CD8-positive, alpha-beta T cell (primary cell): ENCODE measurements at regions of chr21 and their contacts with region 1.

Region 1: DNA sequence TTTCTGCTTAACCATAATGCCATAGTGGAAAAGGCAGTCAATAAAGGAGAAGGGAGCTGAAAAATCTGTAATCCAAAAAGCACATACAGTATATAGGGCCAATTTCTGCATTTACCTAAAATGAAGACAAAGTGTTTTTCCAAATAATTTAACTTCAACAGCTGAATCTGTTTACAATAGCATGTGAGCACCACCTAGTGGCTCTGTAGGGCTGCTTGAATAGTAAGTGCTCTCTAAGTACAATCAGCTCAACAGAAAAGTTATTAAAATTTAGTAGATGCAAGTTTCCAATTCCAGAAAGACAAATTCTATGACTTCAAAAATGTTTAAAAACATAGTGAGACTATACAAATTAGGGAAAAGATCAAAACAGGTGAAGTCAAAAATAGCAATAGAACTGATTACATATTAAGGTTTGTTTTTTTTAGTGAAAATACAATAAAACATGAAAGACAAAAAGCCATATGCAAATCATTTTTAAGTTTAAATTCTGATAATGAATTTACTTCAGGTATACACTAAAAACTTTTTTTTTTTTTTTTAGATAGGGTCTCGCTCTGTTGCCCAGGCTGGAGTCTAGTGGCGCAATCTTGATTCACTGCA is 220.0 kb downstream of the SETD4 start:
- DNase-seq: peak in 8 of 9 experiments; percentile 5 to 74 (median 48)
- ATAC-seq: no peak
- H3K4me3 ChIP-seq: no peak overlapping the region
- H3K4me3 Mint-ChIP-seq: no peak overlapping the region
- H3K27ac ChIP-seq: no peak overlapping the region
- H3K27ac Mint-ChIP-seq: no peak overlapping the region
- H3K4me1 ChIP-seq: peaks cover 8% of the 10 kb centered on the region
- H3K4me1 Mint-ChIP-seq: peaks cover 6% of the 10 kb centered on the region
- H3K27me3 ChIP-seq: peaks cover 0 to 4% of the 10 kb centered on the region in 2 experiments
- H3K27me3 Mint-ChIP-seq: no peaks in the 10 kb centered on the region
- CTCF ChIP-seq: peak; percentile 93

Region 2: DNA sequence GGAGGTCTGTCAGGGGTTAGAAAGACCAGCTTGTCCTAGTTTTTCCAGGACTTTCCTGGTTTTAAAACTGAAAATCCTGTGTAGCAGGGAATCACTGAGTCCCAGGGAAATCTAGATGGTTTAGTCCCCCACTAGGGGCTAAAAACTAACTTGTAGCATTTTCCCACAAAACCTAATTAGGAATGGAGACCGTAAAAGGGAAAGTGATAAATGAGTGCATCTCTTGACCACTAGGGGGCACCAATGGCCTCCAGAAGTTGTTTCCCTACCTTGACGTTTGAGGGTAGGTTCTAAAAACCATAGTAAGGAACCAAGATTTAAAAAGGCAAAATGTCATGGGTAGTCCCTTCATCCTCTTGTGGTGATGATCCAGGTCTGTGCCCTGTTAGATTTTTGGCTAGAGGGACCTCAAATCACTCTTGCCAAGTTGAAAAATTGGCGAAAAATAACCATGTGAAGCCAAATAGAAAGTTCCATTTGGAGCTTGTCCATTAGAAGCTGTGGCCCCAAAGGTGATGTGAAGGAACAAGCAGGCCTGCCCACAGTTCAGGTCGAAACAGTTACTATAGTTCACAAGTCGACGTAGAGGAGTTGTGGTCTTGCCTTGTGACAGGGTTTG is 1147.0 kb before region 1 on chr21:
- CTCF ChIA-PET with region 1: interaction called, 30 read pairs
- POLR2A ChIA-PET with region 1: no interaction called
- intact Hi-C with region 1: loop called (anchors 1 kb)
- DNase-seq: peak in 8 of 9 experiments; percentile 15 to 75 (median 46)
- ATAC-seq: no peak
- H3K4me3 ChIP-seq: no peak overlapping the region
- H3K4me3 Mint-ChIP-seq: no peak overlapping the region
- H3K27ac ChIP-seq: no peak overlapping the region
- H3K27ac Mint-ChIP-seq: no peak overlapping the region
- H3K4me1 ChIP-seq: no peaks in the 10 kb centered on the region
- H3K4me1 Mint-ChIP-seq: no peaks in the 10 kb centered on the region
- H3K27me3 ChIP-seq: no peaks in the 10 kb centered on the region
- H3K27me3 Mint-ChIP-seq: peaks cover 15% of the 10 kb centered on the region
- CTCF ChIP-seq: peak; percentile 79

Region 3: DNA sequence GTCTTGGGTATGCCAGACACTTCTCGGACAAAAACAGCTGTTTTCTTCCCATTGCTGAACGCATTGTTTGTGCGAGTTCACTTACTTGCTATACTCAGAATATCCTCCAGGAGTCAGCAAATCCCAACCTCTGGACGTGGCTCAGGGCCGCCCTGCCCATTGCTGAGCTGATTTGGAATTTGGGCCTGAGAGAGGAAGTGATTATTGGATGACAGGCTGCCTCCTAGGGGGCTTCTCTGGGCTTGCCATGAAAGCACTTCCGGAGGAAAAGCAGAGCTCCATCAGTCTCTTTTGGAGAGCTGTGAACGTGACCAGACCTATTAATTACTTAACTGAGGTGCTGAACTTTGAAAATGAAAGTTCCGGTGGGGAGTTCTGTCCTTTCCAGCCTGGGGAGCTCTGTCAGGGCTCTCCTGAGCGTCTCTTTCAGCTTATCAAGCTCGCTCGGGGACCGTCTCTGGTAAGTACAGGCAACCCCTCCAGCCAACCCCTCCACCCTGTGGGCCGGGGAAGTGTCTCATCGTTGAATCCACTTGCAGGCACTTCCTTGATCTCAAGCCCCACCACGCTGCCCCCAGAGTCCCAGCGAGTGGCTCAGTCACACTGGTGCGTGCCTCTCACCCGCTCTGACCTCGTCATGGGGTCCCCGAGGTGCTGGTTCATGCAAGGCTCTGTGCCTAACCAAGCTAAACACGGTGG is 1094.6 kb before region 1 on chr21:
- CTCF ChIA-PET with region 1: interaction called, 44 read pairs
- POLR2A ChIA-PET with region 1: interaction called, 3 read pairs
- intact Hi-C with region 1: loop called in 1 of 2 experiments (anchors 1 kb)
- DNase-seq: peak; percentile 16 to 71 (median 44)
- ATAC-seq: peak; percentile 80
- H3K4me3 ChIP-seq: peak overlapping the region in 1 of 2 experiments; percentile 13
- H3K4me3 Mint-ChIP-seq: peak overlapping the region; percentile 71
- H3K27ac ChIP-seq: no peak overlapping the region
- H3K27ac Mint-ChIP-seq: no peak overlapping the region
- H3K4me1 ChIP-seq: peaks cover 4% of the 10 kb centered on the region
- H3K4me1 Mint-ChIP-seq: peaks cover 4% of the 10 kb centered on the region
- H3K27me3 ChIP-seq: no peaks in the 10 kb centered on the region
- H3K27me3 Mint-ChIP-seq: peaks cover 4% of the 10 kb centered on the region
- CTCF ChIP-seq: peak; percentile 89

Region 4: GRCh38 chr21:34801519-34802132 is 1038.7 kb before region 1 on chr21:
- CTCF ChIA-PET with region 1: no interaction called
- POLR2A ChIA-PET with region 1: no interaction called
- intact Hi-C with region 1: loop called in 1 of 2 experiments (anchors 1 kb)
- DNase-seq: peak in 4 of 9 experiments; percentile 25 to 60 (median 39)
- ATAC-seq: peak; percentile 46
- H3K4me3 ChIP-seq: no peak overlapping the region
- H3K4me3 Mint-ChIP-seq: no peak overlapping the region
- H3K27ac ChIP-seq: peak overlapping the region in 1 of 2 experiments; percentile 47
- H3K27ac Mint-ChIP-seq: peak overlapping the region; percentile 25
- H3K4me1 ChIP-seq: no peaks in the 10 kb centered on the region
- H3K4me1 Mint-ChIP-seq: peaks cover 26% of the 10 kb centered on the region
- H3K27me3 ChIP-seq: no peaks in the 10 kb centered on the region
- H3K27me3 Mint-ChIP-seq: no peaks in the 10 kb centered on the region
- CTCF ChIP-seq: no peak

Region 5: DNA sequence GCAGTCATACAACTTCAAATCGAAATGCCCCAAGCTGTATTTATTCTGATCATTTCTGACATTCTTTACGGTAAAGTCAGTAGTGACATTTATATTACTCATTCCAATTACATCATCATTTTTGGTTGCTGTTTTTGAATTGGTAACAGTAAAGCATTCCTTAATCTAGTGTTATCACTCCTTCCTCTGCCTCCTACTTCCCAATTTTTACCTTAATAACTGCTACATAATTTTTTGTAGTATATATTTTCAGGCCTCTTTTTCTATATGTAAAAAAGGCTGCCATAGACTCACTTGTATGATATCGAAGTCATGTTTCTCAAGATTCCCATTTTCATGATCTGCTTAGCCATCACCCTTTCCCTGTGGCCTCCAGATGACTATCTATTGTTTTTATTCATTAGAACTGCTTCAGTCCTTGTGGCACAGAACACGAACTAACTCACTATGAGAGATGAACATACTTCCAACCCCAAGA is 958.4 kb before region 1 on chr21:
- CTCF ChIA-PET with region 1: no interaction called
- POLR2A ChIA-PET with region 1: no interaction called
- intact Hi-C with region 1: loop called in 1 of 2 experiments (anchors 5 kb)
- DNase-seq: no peak
- ATAC-seq: no peak
- H3K4me3 ChIP-seq: no peak overlapping the region
- H3K4me3 Mint-ChIP-seq: no peak overlapping the region
- H3K27ac ChIP-seq: no peak overlapping the region
- H3K27ac Mint-ChIP-seq: peak overlapping the region; percentile 28
- H3K4me1 ChIP-seq: peaks cover 10% of the 10 kb centered on the region
- H3K4me1 Mint-ChIP-seq: peaks cover 46% of the 10 kb centered on the region
- H3K27me3 ChIP-seq: no peaks in the 10 kb centered on the region
- H3K27me3 Mint-ChIP-seq: no peaks in the 10 kb centered on the region
- CTCF ChIP-seq: no peak

Region 6: DNA sequence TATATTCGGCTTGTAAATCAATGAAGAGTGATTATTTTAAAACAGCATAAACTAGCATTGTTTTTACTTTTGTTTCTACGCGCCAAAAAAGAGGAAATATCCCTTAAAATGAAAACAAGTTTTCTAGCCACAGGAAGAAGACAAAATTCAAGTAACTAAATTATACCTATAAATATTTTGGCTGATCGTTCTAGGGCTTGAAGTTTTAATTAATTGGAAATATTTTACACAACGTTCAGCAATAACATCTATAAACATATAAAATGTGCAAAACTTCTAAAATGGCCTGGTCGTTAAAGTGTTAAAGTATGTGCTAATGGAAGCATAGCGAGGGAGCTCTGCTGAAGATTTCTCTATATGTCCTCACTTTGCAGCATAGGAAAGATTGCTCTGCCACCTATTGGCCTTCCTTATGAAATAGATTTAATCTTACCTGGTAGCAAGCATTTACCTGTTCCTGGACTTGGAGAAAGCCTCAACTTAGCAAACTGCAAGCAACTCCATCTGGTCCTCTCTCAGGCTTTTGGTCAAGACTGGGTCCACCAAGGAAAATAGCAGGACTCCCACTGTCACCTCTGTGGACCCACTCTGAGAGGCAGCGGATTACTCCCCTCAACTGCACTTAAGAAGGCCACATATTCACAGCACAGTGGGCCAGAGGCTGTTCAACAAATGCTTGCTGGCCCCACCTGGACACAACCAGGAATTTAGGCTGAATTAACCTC is 439.9 kb before region 1 on chr21:
- CTCF ChIA-PET with region 1: interaction called, 6 read pairs
- POLR2A ChIA-PET with region 1: no interaction called
- intact Hi-C with region 1: loop called in 1 of 2 experiments (anchors 5 kb)
- DNase-seq: peak in 8 of 9 experiments; percentile 2 to 81 (median 34)
- ATAC-seq: peak; percentile 89
- H3K4me3 ChIP-seq: no peak overlapping the region
- H3K4me3 Mint-ChIP-seq: no peak overlapping the region
- H3K27ac ChIP-seq: no peak overlapping the region
- H3K27ac Mint-ChIP-seq: no peak overlapping the region
- H3K4me1 ChIP-seq: no peaks in the 10 kb centered on the region
- H3K4me1 Mint-ChIP-seq: no peaks in the 10 kb centered on the region
- H3K27me3 ChIP-seq: no peaks in the 10 kb centered on the region
- H3K27me3 Mint-ChIP-seq: no peaks in the 10 kb centered on the region
- CTCF ChIP-seq: peak; percentile 67

Region 7: GRCh38 chr21:36028127-36029069 is 188.1 kb after region 1 on chr21:
- CTCF ChIA-PET with region 1: interaction called, 3 read pairs
- POLR2A ChIA-PET with region 1: no interaction called
- intact Hi-C with region 1: loop called in 1 of 2 experiments (anchors 5 kb)
- DNase-seq: peak; percentile 23 to 82 (median 66)
- ATAC-seq: peak; percentile 84
- H3K4me3 ChIP-seq: no peak overlapping the region
- H3K4me3 Mint-ChIP-seq: no peak overlapping the region
- H3K27ac ChIP-seq: no peak overlapping the region
- H3K27ac Mint-ChIP-seq: no peak overlapping the region
- H3K4me1 ChIP-seq: peaks cover 4% of the 10 kb centered on the region
- H3K4me1 Mint-ChIP-seq: peaks cover 2% of the 10 kb centered on the region
- H3K27me3 ChIP-seq: no peaks in the 10 kb centered on the region
- H3K27me3 Mint-ChIP-seq: no peaks in the 10 kb centered on the region
- CTCF ChIP-seq: peak; percentile 97

Region 8: DNA sequence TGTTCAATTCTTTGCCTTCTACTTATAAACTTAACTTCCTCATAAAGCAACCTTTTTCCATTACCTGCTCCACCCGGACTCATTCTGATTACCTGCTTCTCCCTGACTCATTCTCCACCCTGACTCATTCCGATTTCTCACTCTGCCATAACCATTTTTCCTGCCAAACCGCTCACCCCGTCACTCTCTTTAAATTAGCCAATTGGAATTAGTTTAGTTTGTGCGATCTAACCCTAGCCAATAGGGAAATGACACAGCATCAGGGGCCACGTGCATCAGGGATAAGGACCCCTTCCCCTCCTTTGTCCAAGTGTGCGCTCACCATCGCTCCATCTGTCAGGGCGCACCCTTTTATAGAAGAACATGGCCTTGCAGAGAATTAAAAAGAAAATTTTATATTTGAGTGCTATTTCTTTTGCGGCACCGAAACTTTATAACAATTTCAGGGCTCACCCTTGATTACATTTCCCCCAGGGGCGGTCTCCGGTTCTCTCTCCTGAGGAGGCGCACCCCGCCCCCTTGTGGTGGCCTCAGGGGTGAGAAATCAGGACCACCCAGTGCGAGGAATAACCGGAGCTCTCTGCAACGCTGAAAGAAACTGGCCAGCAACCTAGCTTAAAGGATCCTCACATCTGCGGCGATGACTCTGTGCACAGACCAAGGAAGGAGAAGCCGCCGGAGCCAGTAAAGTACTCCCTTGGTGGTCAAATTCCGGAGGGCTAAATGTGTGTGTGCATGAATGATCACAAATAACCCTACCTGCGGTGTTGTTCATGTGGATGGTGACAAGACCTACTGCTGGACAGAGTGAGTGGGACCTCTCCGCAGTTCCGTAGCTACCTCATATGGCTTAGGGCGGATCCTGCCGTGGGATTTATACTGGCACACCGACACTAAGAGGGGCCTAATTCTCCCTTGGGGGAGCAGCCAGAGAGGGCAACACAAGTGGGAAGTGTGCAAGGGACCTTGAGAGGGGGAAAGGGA is 264.3 kb after region 1 on chr21:
- CTCF ChIA-PET with region 1: no interaction called
- POLR2A ChIA-PET with region 1: no interaction called
- intact Hi-C with region 1: no loop called
- DNase-seq: peak; percentile 20 to 79 (median 69)
- ATAC-seq: peak; percentile 87
- H3K4me3 ChIP-seq: no peak overlapping the region
- H3K4me3 Mint-ChIP-seq: peak overlapping the region; percentile 3
- H3K27ac ChIP-seq: no peak overlapping the region
- H3K27ac Mint-ChIP-seq: no peak overlapping the region
- H3K4me1 ChIP-seq: no peaks in the 10 kb centered on the region
- H3K4me1 Mint-ChIP-seq: peaks cover 7% of the 10 kb centered on the region
- H3K27me3 ChIP-seq: peaks cover 0 to 7% of the 10 kb centered on the region in 2 experiments
- H3K27me3 Mint-ChIP-seq: peaks cover 21% of the 10 kb centered on the region
- CTCF ChIP-seq: peak; percentile 63